Dendritic cell treated with granulocyte-macrophage colony-stimulating factor and Interleukin-4, amounts not matched to agents 40 ng/mL and 50 ng/mL, for 4 days (primary cell): ENCODE measurements at regions of chr12 and their contacts with region 1.

Region 1: GRCh38 chr12:110888256-110888991 is 32.0 kb downstream of the MYL2 start:
- H3K4me3 Mint-ChIP-seq: no peak overlapping the region
- H3K27ac Mint-ChIP-seq: peak overlapping the region; percentile 90
- H3K4me1 Mint-ChIP-seq: peaks cover 5% of the 10 kb centered on the region
- H3K27me3 Mint-ChIP-seq: peaks cover 4% of the 10 kb centered on the region

Region 2: DNA sequence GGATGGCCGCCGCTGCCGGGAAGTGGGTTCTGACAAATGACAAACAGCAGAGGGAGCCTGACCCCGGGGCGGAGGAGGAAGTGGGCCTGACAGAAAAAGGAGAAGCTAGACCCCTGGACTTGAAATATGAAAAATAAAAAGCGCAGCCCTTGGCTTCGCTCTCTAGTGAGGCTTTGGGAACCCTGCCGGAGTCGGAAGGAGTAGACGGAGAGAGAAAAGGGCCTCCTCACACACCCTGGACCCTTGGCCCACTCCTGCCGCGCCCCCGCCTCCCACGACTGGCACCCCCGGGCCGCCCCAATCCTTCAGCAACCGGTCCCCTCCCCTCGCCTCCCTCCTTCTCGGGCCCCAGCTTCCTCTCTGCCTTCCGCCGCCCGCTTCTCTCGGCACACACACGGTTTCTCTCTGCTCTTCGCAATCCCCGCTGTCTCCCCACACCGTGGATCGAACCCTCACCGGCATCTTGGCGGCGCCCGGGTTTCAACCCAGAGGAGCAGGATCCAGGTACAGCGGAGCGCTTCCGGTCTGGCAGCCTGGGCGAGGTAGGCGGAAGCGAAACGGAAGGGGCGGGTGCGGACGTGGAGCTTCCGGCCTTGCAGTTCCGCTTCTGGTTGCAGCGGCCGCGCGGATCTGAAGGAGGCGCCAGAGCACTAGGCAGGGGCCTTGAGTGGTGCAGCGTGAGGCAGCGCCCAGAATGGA is 438.5 kb before region 1 on chr12 and contains the start of gene ARPC3:
- intact Hi-C with region 1: loop called (anchors 5 kb)
- H3K4me3 Mint-ChIP-seq: peak within 1 kb of the TSS; percentile 100
- H3K27ac Mint-ChIP-seq: peak within 1 kb of the TSS; percentile 100
- H3K4me1 Mint-ChIP-seq: peaks cover 57% of the 10 kb centered on the region
- H3K27me3 Mint-ChIP-seq: no peaks in the 10 kb centered on the region

Region 3: GRCh38 chr12:110606253-110606611 is 282.2 kb before region 1 on chr12:
- intact Hi-C with region 1: loop called (anchors 5 kb)
- H3K4me3 Mint-ChIP-seq: peak overlapping the region; percentile 76
- H3K27ac Mint-ChIP-seq: peak overlapping the region; percentile 96
- H3K4me1 Mint-ChIP-seq: peaks cover 17% of the 10 kb centered on the region
- H3K27me3 Mint-ChIP-seq: no peaks in the 10 kb centered on the region

Region 4: GRCh38 chr12:110742718-110743570 is 145.5 kb before region 1 on chr12 and contains the start of gene PPP1CC:
- intact Hi-C with region 1: loop called (anchors 2 kb)
- H3K4me3 Mint-ChIP-seq: peak within 1 kb of the TSS; percentile 95
- H3K27ac Mint-ChIP-seq: peak within 1 kb of the TSS; percentile 90
- H3K4me1 Mint-ChIP-seq: peaks cover 46% of the 10 kb centered on the region
- H3K27me3 Mint-ChIP-seq: no peaks in the 10 kb centered on the region

Region 5: GRCh38 chr12:110813285-110813684 is 75.1 kb before region 1 on chr12:
- intact Hi-C with region 1: no loop called
- H3K4me3 Mint-ChIP-seq: no peak overlapping the region
- H3K27ac Mint-ChIP-seq: no peak overlapping the region
- H3K4me1 Mint-ChIP-seq: peaks cover 14% of the 10 kb centered on the region
- H3K27me3 Mint-ChIP-seq: peaks cover 29% of the 10 kb centered on the region

Region 6: DNA sequence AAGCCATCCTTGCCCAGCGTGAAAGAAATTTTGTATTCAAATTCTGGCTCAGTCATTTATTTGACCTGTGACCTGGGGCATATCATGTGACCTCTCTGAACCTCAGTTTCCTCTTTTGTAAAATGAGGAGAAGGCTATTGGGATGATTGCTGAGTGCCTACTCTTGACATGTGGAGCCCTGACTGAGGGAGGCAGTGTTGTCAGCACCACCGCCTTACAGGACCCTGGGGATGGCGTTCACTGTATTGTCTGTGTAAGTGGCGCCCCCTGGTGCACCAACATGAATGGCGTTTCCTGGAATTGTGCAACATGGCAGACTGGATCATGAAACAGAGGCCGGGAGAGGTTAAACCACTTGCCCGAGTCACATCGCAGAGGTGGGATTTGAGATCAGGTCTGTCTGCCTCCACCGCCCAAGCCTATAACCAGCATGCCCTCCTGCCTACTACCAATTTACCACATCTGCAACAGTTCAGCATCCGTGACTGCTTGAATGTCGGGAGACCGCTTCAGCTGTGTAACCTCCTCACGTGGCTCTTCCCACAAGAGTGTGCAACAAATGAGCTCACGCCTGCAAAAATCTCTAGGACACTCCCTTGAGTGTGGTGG is 61.7 kb before region 1 on chr12:
- intact Hi-C with region 1: loop called (anchors 2 kb)
- H3K4me3 Mint-ChIP-seq: peak overlapping the region; percentile 67
- H3K27ac Mint-ChIP-seq: peak overlapping the region; percentile 72
- H3K4me1 Mint-ChIP-seq: peaks cover 9% of the 10 kb centered on the region
- H3K27me3 Mint-ChIP-seq: peaks cover 14% of the 10 kb centered on the region

Region 7: DNA sequence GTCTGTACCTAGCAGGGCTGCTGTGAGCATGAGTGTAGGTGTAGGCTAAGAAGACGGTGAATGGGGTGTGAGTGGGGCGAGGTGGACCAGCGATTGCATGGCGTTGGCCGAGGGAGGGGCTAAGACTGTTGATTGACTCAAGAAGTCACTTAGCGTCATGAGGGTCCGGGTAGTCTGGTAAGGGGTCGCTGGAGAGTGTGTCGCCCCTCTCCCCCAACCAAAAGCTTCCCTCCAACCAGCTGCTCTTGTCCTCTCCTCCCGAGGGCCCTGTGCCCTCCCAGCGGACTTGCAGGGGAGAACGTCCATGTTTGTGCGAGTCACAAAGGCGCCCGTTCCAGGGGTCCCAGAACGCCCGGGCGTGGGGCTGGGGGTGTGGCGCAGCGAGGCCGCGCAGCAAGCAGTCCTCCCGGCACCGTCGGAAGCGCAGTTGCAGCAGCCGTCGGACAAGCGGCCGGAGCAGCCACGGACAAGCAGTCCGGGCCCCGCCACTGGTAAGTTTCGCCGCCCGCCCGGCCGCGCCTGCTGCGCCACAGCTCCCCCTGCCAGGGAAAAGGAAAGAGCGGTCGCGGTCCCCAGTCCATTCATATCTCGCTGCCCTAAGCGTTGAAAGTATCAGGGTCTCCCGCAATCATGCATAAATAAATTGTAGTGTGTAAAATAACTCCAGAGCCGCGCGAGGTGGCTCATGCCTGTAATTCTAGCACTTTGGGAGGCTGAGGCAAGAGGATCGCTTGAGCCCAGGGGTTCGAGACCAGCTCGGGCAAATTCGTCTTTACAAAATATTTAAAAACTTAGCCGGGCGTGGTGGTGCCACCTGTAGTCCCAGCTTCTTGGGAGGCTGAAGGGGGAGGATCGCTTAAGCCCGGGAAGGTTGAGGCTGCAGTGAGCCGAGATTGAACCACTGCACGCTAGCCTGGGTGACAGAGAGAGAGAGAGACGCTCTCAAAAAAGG is 41.5 kb before region 1 on chr12 and contains the start of gene CCDC63:
- intact Hi-C with region 1: loop called (anchors 5 kb)
- H3K4me3 Mint-ChIP-seq: peak within 1 kb of the TSS; percentile 74
- H3K27ac Mint-ChIP-seq: peak within 1 kb of the TSS; percentile 88
- H3K4me1 Mint-ChIP-seq: peaks cover 37% of the 10 kb centered on the region
- H3K27me3 Mint-ChIP-seq: peaks cover 32% of the 10 kb centered on the region